Activated CD8-positive, alpha-beta T cell treated with anti-CD3 and anti-CD28 coated beads, Interleukin-2, amount 10 ng/mL, durations not matched to agents 7 days and 5 days (primary cell): ENCODE measurements at regions of chr21 and their contacts with region 1.

Region 1: DNA sequence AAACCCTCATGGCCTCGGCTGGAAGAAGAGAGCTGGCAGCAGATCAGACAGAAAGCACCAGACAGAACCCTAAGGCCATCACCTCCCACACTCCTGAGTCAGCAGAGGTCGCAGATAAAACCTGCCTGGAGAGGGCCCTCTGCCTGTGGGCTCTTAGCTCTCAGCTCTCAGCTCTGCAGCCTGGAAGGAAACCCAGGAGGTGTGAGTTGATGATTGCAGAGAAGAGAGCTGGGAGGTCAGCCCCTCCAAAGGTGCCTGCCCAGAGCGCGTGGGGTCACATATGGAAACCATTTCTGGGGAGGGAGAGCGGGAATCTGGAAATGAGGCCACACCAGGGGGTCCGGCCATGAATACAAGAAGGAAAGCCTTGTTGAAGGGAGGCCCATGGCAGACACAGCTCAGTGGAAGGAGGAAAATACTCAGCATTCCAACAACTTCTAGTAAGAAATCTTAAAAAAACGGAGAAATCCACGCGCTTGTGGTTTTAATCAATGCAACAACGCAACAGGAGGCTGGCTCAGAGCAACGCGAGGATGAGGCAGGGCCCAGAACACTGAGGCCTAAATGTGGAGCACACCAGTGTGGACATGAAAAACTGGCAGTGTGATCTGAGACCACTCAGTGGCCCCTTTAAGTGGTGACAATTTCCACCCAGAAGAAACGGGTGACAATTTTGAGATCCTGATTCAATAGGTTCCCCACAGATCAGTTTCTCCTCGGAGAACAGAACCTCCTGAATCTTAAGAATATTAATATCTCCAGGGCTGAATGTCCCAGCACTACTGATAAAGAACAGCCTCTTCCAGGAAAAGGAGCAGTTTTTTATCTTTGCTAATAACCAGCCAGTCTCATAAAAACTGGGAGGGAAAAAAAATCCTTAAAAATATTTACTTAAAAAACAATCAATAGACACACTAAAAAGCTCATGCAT is 45.7 kb downstream of the PSMG1 start:
- DNase-seq: peak; percentile 16
- ATAC-seq: no peak
- H3K4me3 Mint-ChIP-seq: no peak overlapping the region
- H3K27ac Mint-ChIP-seq: no peak overlapping the region
- H3K4me1 Mint-ChIP-seq: no peaks in the 10 kb centered on the region
- H3K27me3 Mint-ChIP-seq: no peaks in the 10 kb centered on the region

Region 2: DNA sequence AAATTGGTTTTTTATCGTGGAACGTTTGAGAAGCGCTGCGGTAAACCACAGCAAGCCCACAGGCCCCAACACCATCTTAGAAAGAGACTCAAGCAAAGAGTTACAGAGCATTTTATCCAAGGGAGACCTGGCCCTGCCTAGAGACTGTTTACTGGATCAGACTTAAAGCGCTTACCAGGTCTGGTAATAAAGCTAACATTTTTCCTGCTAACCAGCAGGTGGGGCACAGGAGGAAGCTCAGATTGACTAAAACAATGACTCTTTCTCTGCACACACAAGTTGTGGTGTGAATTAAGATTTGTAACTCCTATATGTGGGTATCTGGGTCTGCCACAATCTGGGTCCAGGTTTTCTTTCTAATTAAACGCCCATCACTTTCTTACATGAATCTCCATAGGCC is 468.3 kb before region 1 on chr21:
- CTCF ChIA-PET with region 1: interaction called, 18 read pairs
- POLR2A ChIA-PET with region 1: no interaction called
- DNase-seq: no peak
- ATAC-seq: no peak
- H3K4me3 Mint-ChIP-seq: no peak overlapping the region
- H3K27ac Mint-ChIP-seq: no peak overlapping the region
- H3K4me1 Mint-ChIP-seq: no peaks in the 10 kb centered on the region
- H3K27me3 Mint-ChIP-seq: peaks cover 13% of the 10 kb centered on the region